Endothelial cell of umbilical vein (primary cell): ENCODE measurements at regions of chr9 and their contacts with region 1.

Region 1: GRCh38 chr9:32526041-32526706 is at the start of gene RIGI:
- DNase-seq: peak; percentile 97
- H3K4me3 ChIP-seq: peak within 1 kb of the TSS; percentile 78 to 88 (median 83)
- H3K27ac ChIP-seq: peak within 1 kb of the TSS; percentile 61
- H3K4me1 ChIP-seq: peaks cover 15% of the 10 kb centered on the region
- H3K27me3 ChIP-seq: no peaks in the 10 kb centered on the region
- CTCF ChIP-seq: peak; percentile 29 to 43
- POLR2A ChIP-seq: peak; percentile 87
- total RNA-seq, gene RIGI: 11.4 and 13.3 TPM in 2 replicates

Region 2: GRCh38 chr9:32220750-32221149 is 305.4 kb before region 1 on chr9:
- CTCF ChIA-PET with region 1: no interaction called
- POLR2A ChIA-PET with region 1: no interaction called
- dilution Hi-C with region 1: no loop called
- intact Hi-C with region 1: no loop called
- DNase-seq: no peak
- H3K4me3 ChIP-seq: no peak overlapping the region
- H3K27ac ChIP-seq: no peak overlapping the region
- H3K4me1 ChIP-seq: no peaks in the 10 kb centered on the region
- H3K27me3 ChIP-seq: no peaks in the 10 kb centered on the region
- CTCF ChIP-seq: no peak
- POLR2A ChIP-seq: no peak

Region 3: DNA sequence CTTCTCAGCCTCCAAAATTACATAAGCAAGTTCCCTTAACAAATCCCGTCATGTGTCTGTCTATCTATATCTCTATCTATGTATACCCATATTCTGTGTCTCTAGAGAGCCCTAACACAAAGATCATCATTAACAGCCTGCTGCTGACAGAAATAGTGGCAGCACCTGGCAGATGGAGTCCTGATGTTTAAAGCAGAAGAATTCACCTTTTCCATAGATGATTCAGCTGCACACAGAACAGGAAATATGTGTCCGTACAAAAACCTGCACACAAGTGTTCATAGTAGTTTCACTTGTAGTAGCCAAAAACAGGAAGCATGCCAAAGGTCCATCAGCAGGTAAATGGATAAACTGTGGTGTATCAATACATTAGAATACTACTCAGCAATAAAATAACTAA is 186.8 kb before region 1 on chr9:
- CTCF ChIA-PET with region 1: no interaction called
- POLR2A ChIA-PET with region 1: no interaction called
- dilution Hi-C with region 1: no loop called
- intact Hi-C with region 1: no loop called
- DNase-seq: no peak
- H3K4me3 ChIP-seq: no peak overlapping the region
- H3K27ac ChIP-seq: no peak overlapping the region
- H3K4me1 ChIP-seq: no peaks in the 10 kb centered on the region
- H3K27me3 ChIP-seq: no peaks in the 10 kb centered on the region
- CTCF ChIP-seq: no peak
- POLR2A ChIP-seq: no peak

Region 4: DNA sequence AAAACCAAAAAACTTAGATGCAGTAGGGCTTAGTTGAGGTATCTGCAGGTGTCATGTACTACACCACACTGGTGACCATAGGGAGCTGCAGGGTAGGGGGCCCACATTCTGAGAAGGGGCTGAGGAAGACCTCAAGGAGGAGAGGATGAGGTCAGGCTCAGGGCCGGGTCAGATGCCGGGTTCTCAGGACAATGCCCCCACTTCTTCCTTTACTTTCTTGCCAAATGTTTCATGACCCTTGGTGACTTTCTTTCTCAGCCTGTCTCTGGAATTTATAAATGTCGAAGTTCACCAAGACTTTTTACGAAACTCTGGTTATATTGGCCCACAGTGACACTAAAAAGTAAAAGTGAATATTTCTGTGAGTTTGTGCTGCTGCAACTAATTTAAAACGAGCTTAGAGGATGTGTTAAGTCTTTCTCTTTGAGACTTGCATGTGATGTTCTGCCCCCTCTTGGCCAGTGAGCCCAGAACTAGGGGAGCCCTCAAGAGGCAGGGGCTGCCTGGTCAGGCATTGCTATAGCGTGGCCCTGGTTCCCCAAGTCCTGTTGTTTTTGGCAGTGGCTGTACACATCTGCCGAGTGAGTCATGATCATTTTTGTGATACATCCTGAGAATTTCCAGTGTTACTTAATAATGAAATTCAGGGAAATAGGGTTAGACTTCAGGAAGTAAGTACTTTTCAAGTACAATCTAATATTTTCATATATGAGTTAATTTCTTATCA is 130.5 kb before region 1 on chr9:
- CTCF ChIA-PET with region 1: interaction called, 10 read pairs
- POLR2A ChIA-PET with region 1: no interaction called
- dilution Hi-C with region 1: no loop called
- intact Hi-C with region 1: no loop called
- DNase-seq: peak; percentile 95
- H3K4me3 ChIP-seq: no peak overlapping the region
- H3K27ac ChIP-seq: peak overlapping the region; percentile 60
- H3K4me1 ChIP-seq: peaks cover 29% of the 10 kb centered on the region
- H3K27me3 ChIP-seq: no peaks in the 10 kb centered on the region
- CTCF ChIP-seq: peak; percentile 20 to 46
- POLR2A ChIP-seq: peak; percentile 31

Region 5: DNA sequence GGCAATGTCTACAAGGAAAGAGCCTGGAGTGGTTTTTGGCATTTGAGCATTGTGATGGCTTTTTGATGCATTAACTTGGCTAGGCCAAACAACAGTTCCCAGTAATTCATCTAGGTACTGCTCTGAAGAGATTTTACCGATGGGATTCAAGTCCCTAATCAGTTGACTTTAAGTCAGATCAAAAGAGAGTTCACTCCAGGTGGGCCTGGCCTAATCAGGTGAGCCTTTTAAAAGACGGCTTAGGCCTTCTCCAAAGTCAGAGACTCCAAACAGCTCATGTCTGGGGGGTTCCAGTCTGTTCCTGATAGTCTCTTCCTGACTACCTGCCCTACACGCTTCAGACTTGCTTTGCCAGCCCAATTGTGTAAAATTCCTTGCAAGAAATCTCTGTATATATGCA is 53.8 kb before region 1 on chr9:
- CTCF ChIA-PET with region 1: interaction called, 19 read pairs
- POLR2A ChIA-PET with region 1: no interaction called
- dilution Hi-C with region 1: no loop called
- intact Hi-C with region 1: no loop called
- DNase-seq: no peak
- H3K4me3 ChIP-seq: no peak overlapping the region
- H3K27ac ChIP-seq: no peak overlapping the region
- H3K4me1 ChIP-seq: no peaks in the 10 kb centered on the region
- H3K27me3 ChIP-seq: no peaks in the 10 kb centered on the region
- CTCF ChIP-seq: no peak
- POLR2A ChIP-seq: no peak

Region 6: GRCh38 chr9:32502464-32502863 is 23.7 kb before region 1 on chr9:
- CTCF ChIA-PET with region 1: interaction called, 28 read pairs
- POLR2A ChIA-PET with region 1: interaction called, 5 read pairs
- dilution Hi-C with region 1: no loop called
- intact Hi-C with region 1: loop called (anchors 1 kb)
- DNase-seq: peak; percentile 85
- H3K4me3 ChIP-seq: no peak overlapping the region
- H3K27ac ChIP-seq: peak overlapping the region; percentile 90
- H3K4me1 ChIP-seq: peaks cover 42% of the 10 kb centered on the region
- H3K27me3 ChIP-seq: no peaks in the 10 kb centered on the region
- CTCF ChIP-seq: no peak
- POLR2A ChIP-seq: no peak

Region 7: DNA sequence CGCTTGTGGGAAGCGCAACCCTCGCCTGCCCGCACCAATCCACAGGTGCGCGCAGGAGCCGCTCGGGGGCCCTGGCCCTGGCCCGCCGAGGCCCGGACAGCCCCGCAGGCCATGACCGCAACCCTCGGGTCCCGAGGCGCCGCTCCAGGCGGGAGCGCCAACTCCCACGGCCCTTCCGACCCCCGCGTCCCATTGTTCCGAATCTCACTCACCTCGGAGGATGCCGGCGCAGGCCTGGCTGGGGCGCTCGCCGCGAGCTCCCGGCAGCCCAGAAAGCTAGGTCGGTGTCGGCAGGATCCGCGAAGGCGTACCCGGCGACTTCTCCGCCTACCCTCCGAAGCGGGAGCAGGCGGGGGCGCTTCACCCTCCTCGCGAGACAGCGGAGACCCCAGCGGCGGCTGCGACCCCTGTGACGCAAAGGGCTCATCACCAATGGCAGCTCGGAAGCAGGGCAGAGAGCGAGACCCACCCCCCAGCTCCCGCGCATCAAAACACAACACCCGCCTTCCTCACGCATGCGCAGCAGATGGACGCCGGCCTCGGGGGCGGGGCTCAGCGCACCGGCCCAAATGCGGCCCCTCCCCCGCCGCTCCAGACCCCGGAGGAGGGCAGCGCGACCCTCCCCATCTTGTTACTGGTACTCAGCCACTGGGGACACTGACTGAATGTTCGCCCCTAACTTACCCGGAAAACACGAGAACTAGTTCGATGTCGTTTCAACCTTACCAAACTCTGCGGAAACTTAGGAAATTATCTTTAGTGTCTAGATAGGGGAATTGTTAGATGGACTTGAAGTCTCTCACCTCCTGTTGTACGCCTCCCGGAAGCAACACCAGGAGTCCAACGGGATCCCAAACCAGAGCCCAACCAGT is 24.6 kb after region 1 on chr9:
- CTCF ChIA-PET with region 1: interaction called, 23 read pairs
- POLR2A ChIA-PET with region 1: interaction called, 17 read pairs
- dilution Hi-C with region 1: no loop called
- intact Hi-C with region 1: loop called (anchors 1 kb)
- DNase-seq: peak; percentile 98
- H3K4me3 ChIP-seq: peak overlapping the region; percentile 71 to 88 (median 77)
- H3K27ac ChIP-seq: peak overlapping the region; percentile 92
- H3K4me1 ChIP-seq: peaks cover 17% of the 10 kb centered on the region
- H3K27me3 ChIP-seq: no peaks in the 10 kb centered on the region
- CTCF ChIP-seq: peak in 1 of 2 donors; percentile 22
- POLR2A ChIP-seq: no peak

Region 8: DNA sequence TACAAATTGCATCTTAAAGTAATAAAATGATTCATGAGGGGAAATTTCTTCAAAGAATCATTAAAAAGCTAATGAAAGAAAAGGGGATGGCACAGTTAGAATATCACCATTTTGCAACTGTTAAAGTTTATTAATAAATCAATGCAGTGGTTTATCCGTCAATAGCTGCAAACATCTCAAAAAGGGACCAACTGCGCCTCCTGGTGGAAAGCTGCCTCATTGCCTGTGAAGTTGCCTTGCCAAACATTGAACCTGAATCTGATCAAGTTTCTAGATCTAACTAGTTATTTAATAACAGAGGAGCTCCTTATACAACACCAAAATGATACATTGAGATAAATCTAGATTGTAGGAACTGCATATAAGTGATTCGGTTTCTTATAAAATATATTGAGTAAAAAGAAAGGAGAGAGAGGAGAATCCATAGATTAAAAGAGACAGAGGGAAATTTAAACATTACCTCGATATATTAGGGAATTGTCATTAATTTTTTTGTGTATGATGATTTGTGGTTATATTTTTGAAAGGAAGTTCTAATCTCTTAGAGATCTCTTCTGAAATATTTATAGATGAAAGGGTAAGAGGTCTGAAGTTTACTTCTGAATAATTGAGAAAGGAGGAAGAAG is 53.6 kb after region 1 on chr9:
- CTCF ChIA-PET with region 1: interaction called, 18 read pairs
- POLR2A ChIA-PET with region 1: no interaction called
- dilution Hi-C with region 1: no loop called
- intact Hi-C with region 1: loop called (anchors 2 kb)
- DNase-seq: peak; percentile 67
- H3K4me3 ChIP-seq: no peak overlapping the region
- H3K27ac ChIP-seq: no peak overlapping the region
- H3K4me1 ChIP-seq: peaks cover 9% of the 10 kb centered on the region
- H3K27me3 ChIP-seq: peaks cover 8 to 10% of the 10 kb centered on the region in 2 experiments
- CTCF ChIP-seq: peak; percentile 85 to 89
- POLR2A ChIP-seq: no peak